Testis (tissue), 5 donors: ENCODE measurements at regions of chr20 and their contacts with region 1.

Region 1: DNA sequence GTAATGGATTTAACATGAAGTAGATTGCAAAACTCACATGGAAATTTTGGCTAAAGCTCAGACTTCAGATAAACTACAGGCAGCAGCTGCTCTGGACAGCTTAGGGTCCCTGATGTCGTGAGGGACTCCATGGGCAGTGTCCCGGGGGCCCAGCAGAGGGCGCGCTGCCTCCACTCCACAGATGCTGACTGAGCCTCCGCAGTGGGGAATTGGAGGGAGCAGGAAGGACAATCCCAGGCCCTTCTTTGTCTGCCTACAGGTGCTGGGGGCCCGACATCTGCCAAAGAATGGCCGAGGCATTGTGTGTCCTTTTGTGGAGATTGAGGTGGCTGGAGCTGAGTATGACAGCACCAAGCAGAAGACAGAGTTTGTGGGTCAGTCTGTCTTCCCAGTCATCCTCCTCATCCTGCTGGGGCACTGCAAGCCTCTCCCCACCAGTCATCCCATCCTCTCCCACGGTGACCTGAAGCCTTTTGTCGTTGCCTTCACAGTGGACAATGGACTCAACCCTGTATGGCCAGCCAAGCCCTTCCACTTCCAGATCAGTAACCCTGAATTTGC is 35.9 kb downstream of the PLCG1 start:
- DNase-seq: peak; percentile 88
- H3K4me3 ChIP-seq: no peak overlapping the region
- H3K27ac ChIP-seq: peak overlapping the region; percentile 48 to 73
- H3K4me1 ChIP-seq: peaks cover 34% of the 10 kb centered on the region
- H3K27me3 ChIP-seq: no peaks in the 10 kb centered on the region
- CTCF ChIP-seq: peak; percentile 87 to 95 (median 88)
- POLR2A ChIP-seq: no peak

Region 2: GRCh38 chr20:40980106-40980827 is 193.0 kb before region 1 on chr20:
- intact Hi-C with region 1: no loop called
- DNase-seq: no peak
- H3K4me3 ChIP-seq: no peak overlapping the region
- H3K27ac ChIP-seq: no peak overlapping the region
- H3K4me1 ChIP-seq: no peaks in the 10 kb centered on the region
- H3K27me3 ChIP-seq: no peaks in the 10 kb centered on the region
- CTCF ChIP-seq: no peak
- POLR2A ChIP-seq: no peak

Region 3: DNA sequence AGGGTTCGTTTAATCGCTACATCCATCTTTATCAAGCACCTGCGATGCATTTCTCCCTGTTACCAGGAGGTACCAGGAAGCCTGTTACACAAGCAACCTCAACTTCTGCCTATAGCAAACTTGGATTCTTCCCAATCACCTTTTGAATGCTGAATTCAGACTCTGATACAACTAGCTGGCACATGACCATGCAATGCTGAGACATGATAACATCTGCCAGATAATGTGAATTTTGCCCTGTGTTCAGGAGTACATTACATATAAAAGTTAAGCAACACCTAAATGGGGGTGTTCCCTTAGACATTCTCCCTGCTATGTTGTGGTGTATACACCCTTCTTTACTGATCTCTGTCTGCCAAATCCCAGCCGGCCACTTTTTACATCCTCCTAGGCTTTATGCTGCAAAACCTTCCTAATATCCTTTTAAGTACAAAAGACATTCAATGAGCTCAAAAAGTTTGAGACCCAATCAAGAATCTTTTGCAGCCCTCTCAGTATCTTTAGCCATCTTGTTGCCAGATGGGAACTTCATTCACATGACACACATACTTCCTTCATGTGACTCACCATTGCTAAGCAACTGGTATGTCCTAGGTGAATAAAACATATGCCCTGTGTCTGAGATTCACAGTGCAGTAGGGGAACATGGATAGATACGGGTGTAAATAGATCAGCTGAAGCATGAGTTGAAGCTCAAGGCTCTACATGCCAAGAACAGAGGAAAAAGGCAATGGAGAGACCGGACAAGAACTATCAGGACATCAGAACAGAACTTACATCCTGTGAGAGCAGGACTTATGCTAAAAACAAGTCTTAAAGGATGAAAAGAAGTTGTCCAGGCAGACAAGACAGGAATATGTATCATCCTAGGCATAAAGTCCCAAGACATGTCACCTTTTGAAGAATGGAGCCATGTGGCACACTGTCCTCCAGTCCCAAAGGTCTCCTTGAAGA is 60.0 kb after region 1 on chr20:
- intact Hi-C with region 1: loop called (anchors 10 kb)
- DNase-seq: no peak
- H3K4me3 ChIP-seq: no peak overlapping the region
- H3K27ac ChIP-seq: peak overlapping the region; percentile 15 to 68
- H3K4me1 ChIP-seq: peaks cover 25% of the 10 kb centered on the region
- H3K27me3 ChIP-seq: no peaks in the 10 kb centered on the region
- CTCF ChIP-seq: no peak
- POLR2A ChIP-seq: no peak

Region 4: DNA sequence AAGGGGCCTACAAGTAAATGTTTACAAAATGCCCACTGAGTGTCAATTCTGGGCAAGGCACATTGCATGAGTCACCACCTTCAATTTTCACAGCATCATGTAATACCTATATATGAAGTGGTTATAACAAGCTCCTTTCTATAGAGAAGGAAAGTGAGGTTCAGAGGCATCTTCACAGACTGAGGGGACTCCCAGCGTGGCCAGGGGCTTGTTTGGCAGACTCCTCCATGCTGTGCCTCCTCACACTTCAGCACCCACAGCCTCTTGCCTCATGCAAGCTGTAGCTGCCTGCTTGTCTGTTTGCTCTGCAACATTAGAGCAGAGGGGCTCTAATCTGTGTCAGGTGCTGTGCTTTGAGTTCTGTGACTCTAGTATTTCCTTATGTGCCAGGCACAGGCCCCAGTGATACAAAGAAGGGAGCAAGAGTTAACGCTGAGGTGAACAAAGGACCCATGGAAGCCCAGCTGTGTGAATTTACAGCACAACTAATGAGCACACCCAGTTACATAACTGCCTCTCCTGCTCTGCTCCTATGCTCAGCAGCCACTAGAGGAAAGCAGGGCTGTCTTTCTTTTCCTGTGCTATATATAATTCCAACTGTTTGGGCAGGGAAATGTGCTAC is 72.0 kb after region 1 on chr20:
- intact Hi-C with region 1: no loop called
- DNase-seq: no peak
- H3K4me3 ChIP-seq: no peak overlapping the region
- H3K27ac ChIP-seq: peak overlapping the region; percentile 46 to 87
- H3K4me1 ChIP-seq: peaks cover 38% of the 10 kb centered on the region
- H3K27me3 ChIP-seq: no peaks in the 10 kb centered on the region
- CTCF ChIP-seq: peak in 1 of 3 experiments; percentile 13
- POLR2A ChIP-seq: no peak

Region 5: DNA sequence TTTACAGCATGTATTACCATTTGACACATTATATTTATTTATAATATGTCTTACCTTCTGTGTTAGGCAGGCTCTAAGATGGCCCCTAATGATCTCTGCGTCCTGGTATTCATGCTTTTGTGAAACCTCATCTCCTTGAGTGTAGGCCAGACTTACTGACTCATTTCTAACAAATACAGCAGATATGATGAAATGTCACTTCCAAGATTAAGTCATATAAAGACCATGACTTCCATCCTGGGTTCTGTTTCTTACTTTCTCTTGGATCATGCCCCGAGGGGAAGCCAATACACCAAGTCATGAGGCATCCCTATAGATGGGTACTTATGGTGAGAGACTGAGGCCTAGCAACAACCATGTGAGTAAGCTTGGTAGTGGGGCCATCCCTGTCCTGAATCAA is 114.1 kb after region 1 on chr20:
- intact Hi-C with region 1: no loop called
- DNase-seq: no peak
- H3K4me3 ChIP-seq: no peak overlapping the region
- H3K27ac ChIP-seq: no peak overlapping the region
- H3K4me1 ChIP-seq: no peaks in the 10 kb centered on the region
- H3K27me3 ChIP-seq: no peaks in the 10 kb centered on the region
- CTCF ChIP-seq: no peak
- POLR2A ChIP-seq: no peak

Region 6: GRCh38 chr20:41339507-41340326 is 166.5 kb after region 1 on chr20:
- intact Hi-C with region 1: loop called (anchors 10 kb)
- DNase-seq: peak; percentile 89
- H3K4me3 ChIP-seq: peak overlapping the region; percentile 29 to 51
- H3K27ac ChIP-seq: no peak overlapping the region
- H3K4me1 ChIP-seq: peaks cover 14% of the 10 kb centered on the region
- H3K27me3 ChIP-seq: no peaks in the 10 kb centered on the region
- CTCF ChIP-seq: peak; percentile 97 to 99 (median 98)
- POLR2A ChIP-seq: no peak